ENCODE measurements at regions of chr13 and their contacts with region 1.

Region 1: DNA sequence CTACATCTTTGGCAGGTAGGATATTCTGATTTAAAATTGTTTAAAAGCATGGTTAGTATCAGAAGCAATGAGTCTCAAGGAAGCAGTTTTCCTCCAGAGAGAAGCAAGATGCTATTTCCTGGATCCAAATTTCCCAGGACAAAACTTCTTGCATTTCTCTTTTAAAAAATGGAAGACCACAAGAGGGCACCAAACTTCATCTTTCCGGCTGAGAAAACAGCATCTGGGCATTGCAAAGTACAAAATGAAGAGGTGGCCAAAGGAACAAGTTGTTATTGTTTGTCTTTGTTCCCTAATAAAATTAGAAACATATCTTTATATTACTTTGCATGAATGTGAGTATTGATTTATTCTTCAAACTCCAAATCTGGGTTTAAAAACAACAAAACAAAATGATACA is 60.0 kb upstream of the LRCH1 start:
- DNase-seq: no peak
- ATAC-seq: no peak
- H3K4me3 Mint-ChIP-seq: no peak overlapping the region
- H3K27ac Mint-ChIP-seq: no peak overlapping the region
- H3K4me1 Mint-ChIP-seq: no peaks in the 10 kb centered on the region
- H3K27me3 Mint-ChIP-seq: no peaks in the 10 kb centered on the region
- CTCF ChIP-seq: peak; percentile 65

Region 2: GRCh38 chr13:46630431-46631178 is 137.7 kb after region 1 on chr13:
- CTCF ChIA-PET with region 1: no interaction called
- POLR2A ChIA-PET with region 1: no interaction called
- intact Hi-C with region 1: no loop called
- DNase-seq: no peak
- ATAC-seq: peak; percentile 34
- H3K4me3 Mint-ChIP-seq: peak overlapping the region; percentile 29
- H3K27ac Mint-ChIP-seq: peak overlapping the region; percentile 67
- H3K4me1 Mint-ChIP-seq: peaks cover 83% of the 10 kb centered on the region
- H3K27me3 Mint-ChIP-seq: no peaks in the 10 kb centered on the region
- CTCF ChIP-seq: no peak

Region 3: DNA sequence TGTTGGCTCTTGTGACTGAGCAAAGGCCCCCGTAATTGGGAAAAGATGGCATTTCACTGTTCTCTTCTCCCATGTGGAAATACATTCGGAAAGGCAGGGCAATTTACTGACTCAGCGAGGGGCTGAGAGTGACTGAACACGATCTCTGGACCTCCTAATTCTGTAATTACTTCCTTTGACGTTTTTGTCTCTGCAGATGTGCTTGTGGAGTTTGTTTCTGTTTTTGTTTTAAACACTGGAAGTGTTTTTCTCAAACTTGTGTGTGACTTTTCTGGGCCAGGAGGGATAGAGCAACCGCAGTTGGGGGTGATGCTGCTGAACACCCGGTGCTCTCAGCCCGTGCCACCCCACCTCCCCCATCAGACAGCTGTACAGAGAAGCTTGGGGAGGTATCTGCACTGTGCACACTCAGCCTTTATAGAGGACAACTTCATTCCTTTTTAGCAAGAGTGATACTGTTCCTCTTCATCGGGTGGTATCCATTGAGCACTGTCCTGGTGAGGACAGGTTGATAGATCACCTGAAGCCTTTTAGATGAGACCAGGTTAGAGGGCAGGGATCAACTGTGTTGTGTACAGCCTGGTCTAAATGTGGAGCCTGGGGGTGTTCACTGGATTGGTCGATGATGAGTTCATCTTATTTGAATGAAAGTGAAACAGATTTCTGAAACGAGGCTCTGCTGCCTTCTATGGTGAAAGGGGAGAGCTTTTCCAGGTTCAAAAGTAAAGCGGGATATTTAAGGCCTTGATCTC is 186.6 kb after region 1 on chr13:
- CTCF ChIA-PET with region 1: interaction called, 5 read pairs
- POLR2A ChIA-PET with region 1: no interaction called
- intact Hi-C with region 1: loop called (anchors 2 kb)
- DNase-seq: peak; percentile 20
- ATAC-seq: peak; percentile 90
- H3K4me3 Mint-ChIP-seq: no peak overlapping the region
- H3K27ac Mint-ChIP-seq: no peak overlapping the region
- H3K4me1 Mint-ChIP-seq: peaks cover 29% of the 10 kb centered on the region
- H3K27me3 Mint-ChIP-seq: no peaks in the 10 kb centered on the region
- CTCF ChIP-seq: no peak

Region 4: GRCh38 chr13:46721054-46721453 is 228.1 kb after region 1 on chr13:
- CTCF ChIA-PET with region 1: interaction called, 30 read pairs
- POLR2A ChIA-PET with region 1: no interaction called
- intact Hi-C with region 1: loop called (anchors 1 kb)
- DNase-seq: no peak
- ATAC-seq: peak; percentile 49
- H3K4me3 Mint-ChIP-seq: no peak overlapping the region
- H3K27ac Mint-ChIP-seq: no peak overlapping the region
- H3K4me1 Mint-ChIP-seq: peaks cover 8% of the 10 kb centered on the region
- H3K27me3 Mint-ChIP-seq: no peaks in the 10 kb centered on the region
- CTCF ChIP-seq: no peak

Region 5: GRCh38 chr13:46759846-46760245 is 266.9 kb after region 1 on chr13:
- CTCF ChIA-PET with region 1: interaction called, 9 read pairs
- POLR2A ChIA-PET with region 1: no interaction called
- intact Hi-C with region 1: loop called (anchors 2 kb)
- DNase-seq: no peak
- ATAC-seq: no peak
- H3K4me3 Mint-ChIP-seq: no peak overlapping the region
- H3K27ac Mint-ChIP-seq: no peak overlapping the region
- H3K4me1 Mint-ChIP-seq: peaks cover 21% of the 10 kb centered on the region
- H3K27me3 Mint-ChIP-seq: peaks cover 1% of the 10 kb centered on the region
- CTCF ChIP-seq: no peak